PC-3 (cell line): ENCODE measurements at regions of chr17 and their contacts with region 1.

Region 1: GRCh38 chr17:56641894-56642293 is 48.4 kb downstream of the NOG start:
- DNase-seq: no peak
- ATAC-seq: no peak
- H3K4me3 ChIP-seq: no peak overlapping the region
- H3K27ac ChIP-seq: no peak overlapping the region
- H3K4me1 ChIP-seq: peaks cover 2% of the 10 kb centered on the region; the same call in 1 of the 2 replicates
- H3K27me3 ChIP-seq: no peaks in the 10 kb centered on the region
- CTCF ChIP-seq: no peak

Region 2: GRCh38 chr17:56260376-56261002 is 381.4 kb before region 1 on chr17:
- CTCF ChIA-PET with region 1: no interaction called
- POLR2A ChIA-PET with region 1: no interaction called
- intact Hi-C with region 1: no loop called
- DNase-seq: no peak
- ATAC-seq: no peak
- H3K4me3 ChIP-seq: no peak overlapping the region
- H3K27ac ChIP-seq: no peak overlapping the region
- H3K4me1 ChIP-seq: no peaks in the 10 kb centered on the region
- H3K27me3 ChIP-seq: peaks cover 18% of the 10 kb centered on the region
- CTCF ChIP-seq: no peak

Region 3: GRCh38 chr17:56773124-56773523 is 131.2 kb after region 1 on chr17:
- CTCF ChIA-PET with region 1: no interaction called
- POLR2A ChIA-PET with region 1: no interaction called
- intact Hi-C with region 1: no loop called
- DNase-seq: no peak
- ATAC-seq: no peak
- H3K4me3 ChIP-seq: no peak overlapping the region
- H3K27ac ChIP-seq: peak overlapping the region; percentile 86
- H3K4me1 ChIP-seq: peaks cover 32% of the 10 kb centered on the region
- H3K27me3 ChIP-seq: no peaks in the 10 kb centered on the region
- CTCF ChIP-seq: no peak

Region 4: DNA sequence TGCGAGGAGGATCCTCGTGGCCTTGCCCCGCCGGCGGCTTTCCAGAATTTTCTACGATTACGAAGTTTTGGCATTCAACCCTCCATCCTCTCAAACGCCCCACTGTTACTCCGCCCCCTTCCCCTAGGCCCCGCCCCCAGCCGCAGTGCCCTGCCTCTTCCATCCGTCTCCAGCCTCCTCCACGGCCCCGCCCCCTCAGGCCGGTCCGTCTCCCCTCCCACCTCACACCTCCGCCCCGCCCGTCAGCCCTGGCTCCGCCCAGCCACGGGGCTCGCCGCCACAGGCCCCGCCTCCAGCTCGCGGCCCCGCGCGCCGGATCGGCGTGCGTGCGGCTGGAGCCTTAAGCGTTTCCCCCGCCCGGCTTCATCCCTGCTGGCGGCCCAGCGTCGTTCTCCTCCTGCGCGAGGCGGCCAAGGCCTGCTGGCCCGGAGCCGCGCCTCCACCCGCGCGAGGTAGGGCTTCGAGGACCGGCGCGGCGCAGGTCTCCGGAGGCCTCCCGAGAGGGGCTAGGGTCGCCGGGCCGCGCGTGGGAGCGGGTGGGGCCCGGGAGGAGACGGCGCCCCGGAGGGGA is 192.0 kb after region 1 on chr17 and contains the starts of genes C17orf67 and DGKE:
- CTCF ChIA-PET with region 1: no interaction called
- POLR2A ChIA-PET with region 1: interaction called, 10 read pairs
- intact Hi-C with region 1: no loop called
- DNase-seq: peak; percentile 98
- ATAC-seq: peak; percentile 79
- H3K4me3 ChIP-seq: peak within 1 kb of the TSS; percentile 74
- H3K27ac ChIP-seq: peak within 1 kb of the TSS; percentile 16
- H3K4me1 ChIP-seq: peaks cover 43% of the 10 kb centered on the region
- H3K27me3 ChIP-seq: no peaks in the 10 kb centered on the region
- CTCF ChIP-seq: no peak
- total RNA-seq, gene C17orf67: 2.3 and 4.4 TPM in 2 replicates
- total RNA-seq, gene DGKE: 8.4 and 12.4 TPM in 2 replicates